HEK293 (cell line): ENCODE measurements at regions of chr17 and their contacts with region 1.

Region 1: DNA sequence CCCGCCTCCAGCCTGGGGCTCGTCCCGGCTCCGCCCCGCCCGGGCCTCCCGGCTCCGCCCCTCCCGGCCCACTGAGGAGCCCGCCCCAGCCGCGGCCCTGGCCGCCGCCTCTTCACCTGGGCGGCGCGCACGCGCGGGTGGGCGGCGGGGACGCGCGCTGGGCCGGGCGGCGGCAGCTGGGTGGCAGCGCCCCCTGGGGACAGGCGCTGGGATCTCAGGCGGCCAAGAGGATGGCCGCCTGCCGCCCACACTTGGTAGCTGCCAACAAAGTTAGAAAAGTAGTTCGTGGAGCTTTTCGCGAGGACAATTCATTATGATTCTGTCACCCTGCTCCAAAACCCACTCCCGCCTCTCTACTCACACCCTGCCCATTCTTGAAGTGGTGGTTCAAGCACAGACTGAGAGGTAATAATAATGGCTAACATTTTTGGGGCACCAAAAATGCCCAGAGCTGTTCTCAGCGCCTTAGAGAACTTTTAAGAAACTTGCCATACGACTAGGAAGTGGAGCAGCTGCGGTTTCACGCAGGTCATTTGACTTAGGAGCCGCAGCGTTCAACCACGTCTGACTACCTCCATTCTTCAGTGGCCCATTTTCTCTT is 340 bp upstream of the MYO1D start:
- H3K4me3 ChIP-seq: peak overlapping the region; percentile 88
- H3K27ac ChIP-seq: peak overlapping the region; percentile 96; the same call in 1 of the 2 replicates
- H3K4me1 ChIP-seq: peaks cover 9% of the 10 kb centered on the region
- CTCF ChIP-seq: peak; percentile 53

Region 2: DNA sequence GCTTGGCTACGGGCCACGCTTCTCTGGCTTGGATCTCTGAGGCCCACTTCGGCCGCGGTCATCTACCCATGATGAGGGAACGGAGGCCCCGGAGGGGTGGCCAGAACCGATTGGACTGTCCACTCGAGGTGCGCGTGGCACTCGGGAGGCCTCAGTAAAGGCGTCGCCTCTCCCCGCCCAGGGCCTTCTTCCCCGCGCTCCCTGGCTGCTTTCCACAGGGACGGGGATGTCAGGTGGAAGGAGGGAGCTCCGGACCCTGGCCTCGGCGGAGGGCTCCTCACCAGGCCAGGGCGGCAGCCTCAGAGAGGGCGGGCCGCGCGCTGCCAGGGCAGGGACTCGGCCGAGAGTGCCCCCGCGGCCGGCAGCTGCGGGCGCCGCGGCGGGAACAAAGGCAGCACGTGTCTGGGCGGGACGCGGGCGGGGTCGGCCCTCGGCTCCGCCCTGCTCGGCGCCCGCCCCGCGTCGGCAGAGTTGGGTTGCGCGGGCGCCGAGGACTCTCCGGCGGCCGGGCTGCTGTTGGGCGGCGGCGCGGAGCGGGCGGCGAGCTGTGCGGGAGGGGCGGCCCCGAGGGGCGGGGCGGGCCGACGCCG is 391.1 kb before region 1 on chr17:
- CTCF ChIA-PET with region 1: interaction called, 10 read pairs
- POLR2A ChIA-PET with region 1: interaction called, 3 read pairs
- H3K4me3 ChIP-seq: peak overlapping the region; percentile 57
- H3K27ac ChIP-seq: peak overlapping the region; percentile 80; the same call in 1 of the 2 replicates
- H3K4me1 ChIP-seq: peaks cover 31% of the 10 kb centered on the region
- CTCF ChIP-seq: no peak

Region 3: GRCh38 chr17:32794533-32795246 is 82.6 kb before region 1 on chr17:
- CTCF ChIA-PET with region 1: interaction called, 20 read pairs
- POLR2A ChIA-PET with region 1: no interaction called
- H3K4me3 ChIP-seq: no peak overlapping the region
- H3K27ac ChIP-seq: no peak overlapping the region
- H3K4me1 ChIP-seq: no peaks in the 10 kb centered on the region
- CTCF ChIP-seq: no peak

Region 4: GRCh38 chr17:32840241-32840640 is 37.0 kb before region 1 on chr17:
- CTCF ChIA-PET with region 1: interaction called, 11 read pairs
- POLR2A ChIA-PET with region 1: interaction called, 3 read pairs
- H3K4me3 ChIP-seq: no peak overlapping the region
- H3K27ac ChIP-seq: no peak overlapping the region
- H3K4me1 ChIP-seq: 0 out of 2 replicates have a peak, but pooled peaks cover 9% of the 10 kb centered on the region
- CTCF ChIP-seq: no peak

Region 5: DNA sequence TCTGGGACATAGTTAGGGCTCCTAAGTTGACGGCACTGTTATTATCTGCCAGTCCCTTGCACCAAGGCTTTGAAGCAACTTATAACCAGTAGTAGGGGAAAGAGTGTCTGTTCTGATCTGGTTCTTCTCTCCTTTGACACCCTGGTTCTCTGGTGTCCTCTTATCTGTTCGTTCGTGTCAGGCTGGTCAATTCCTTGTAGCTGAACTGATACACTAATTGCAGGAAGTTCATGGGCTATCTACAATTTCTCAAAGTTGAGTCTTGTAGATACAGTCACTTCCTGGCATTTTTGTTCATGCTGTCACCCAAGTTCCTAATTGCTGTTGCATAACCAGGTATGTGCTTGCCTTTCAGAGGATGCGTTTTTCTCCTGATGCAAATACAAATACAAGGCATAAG is 17.0 kb after region 1 on chr17:
- CTCF ChIA-PET with region 1: interaction called, 11 read pairs
- POLR2A ChIA-PET with region 1: no interaction called
- H3K4me3 ChIP-seq: no peak overlapping the region
- H3K27ac ChIP-seq: no peak overlapping the region
- H3K4me1 ChIP-seq: no peaks in the 10 kb centered on the region
- CTCF ChIP-seq: no peak

Region 6: DNA sequence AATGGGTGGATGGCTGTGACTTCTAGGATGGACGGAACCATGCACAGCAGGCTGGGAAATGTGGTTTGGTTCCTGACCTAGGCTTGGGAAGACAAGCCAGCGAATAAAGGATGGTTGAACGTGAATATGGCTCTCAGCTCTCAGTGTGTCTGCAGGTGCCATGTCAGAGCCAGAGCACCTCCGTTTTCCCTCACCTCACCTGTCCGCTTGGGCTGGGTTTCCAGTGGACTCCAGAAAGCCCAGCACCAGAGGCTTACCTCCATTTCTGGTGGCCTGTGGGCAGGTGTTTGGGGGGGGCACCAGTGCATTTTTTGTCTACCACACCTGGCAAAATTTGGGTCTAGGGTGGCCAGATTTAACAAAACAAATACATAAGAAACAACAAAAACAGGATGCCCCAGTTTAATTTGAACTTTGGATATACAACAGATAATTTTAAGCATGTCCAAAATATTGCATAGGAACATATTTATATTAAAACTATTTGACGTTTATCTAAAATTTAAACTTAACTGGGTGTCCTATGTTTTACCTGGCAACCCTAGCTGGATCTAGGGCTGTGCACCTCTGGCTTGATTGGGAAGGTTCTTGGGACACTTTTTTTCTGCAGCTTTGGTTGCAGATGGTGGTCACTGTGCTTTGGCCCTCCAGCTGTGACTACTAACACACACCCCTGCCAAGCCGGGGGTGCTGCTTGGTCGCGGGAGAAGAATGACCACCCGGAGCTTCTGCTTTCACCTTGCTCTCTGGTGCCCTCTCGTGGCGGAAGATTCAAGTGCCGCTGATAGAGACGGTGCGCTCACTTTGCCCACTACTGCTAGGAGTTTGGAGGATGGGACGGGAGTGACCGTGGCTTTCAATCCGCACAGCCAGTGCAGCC is 120.7 kb after region 1 on chr17:
- CTCF ChIA-PET with region 1: interaction called, 10 read pairs
- POLR2A ChIA-PET with region 1: no interaction called
- H3K4me3 ChIP-seq: peak overlapping the region; percentile 26
- H3K27ac ChIP-seq: no peak overlapping the region
- H3K4me1 ChIP-seq: no peaks in the 10 kb centered on the region
- CTCF ChIP-seq: peak; percentile 85